ENCODE measurements at regions of chr10 and their contacts with region 1.

Region 1: DNA sequence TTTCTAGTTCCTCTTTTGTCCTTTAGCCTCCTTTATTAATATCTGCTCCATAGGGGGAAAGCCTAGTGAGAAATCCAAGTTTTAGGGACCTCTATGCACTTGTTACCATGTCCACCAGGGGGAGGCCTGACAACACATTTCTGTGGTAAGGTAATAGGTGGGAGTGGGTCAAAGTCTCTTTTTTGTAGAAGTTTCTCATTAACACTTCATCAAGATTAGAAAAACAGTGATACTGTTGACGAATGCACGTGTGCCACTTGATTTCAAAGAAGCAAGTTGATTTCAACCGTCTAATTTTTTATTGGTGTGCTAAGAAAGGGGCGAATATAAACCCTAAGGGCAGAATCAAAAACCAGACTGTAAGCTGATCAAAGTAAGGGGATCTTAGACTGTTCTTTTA is 30.6 kb downstream of the CISD1 start:
- DNase-seq: peak; percentile 62 to 68
- ATAC-seq: peak; percentile 94 to 97
- H3K4me3 ChIP-seq: no peak overlapping the region
- H3K27ac ChIP-seq: no peak overlapping the region
- H3K4me1 ChIP-seq: no peaks in the 10 kb centered on the region
- CTCF ChIP-seq: peak; percentile 88
- EP300 ChIP-seq: no peak
- POLR2A ChIP-seq: no peak
- RAD21 ChIP-seq: peak; percentile 89 to 90

Region 2: DNA sequence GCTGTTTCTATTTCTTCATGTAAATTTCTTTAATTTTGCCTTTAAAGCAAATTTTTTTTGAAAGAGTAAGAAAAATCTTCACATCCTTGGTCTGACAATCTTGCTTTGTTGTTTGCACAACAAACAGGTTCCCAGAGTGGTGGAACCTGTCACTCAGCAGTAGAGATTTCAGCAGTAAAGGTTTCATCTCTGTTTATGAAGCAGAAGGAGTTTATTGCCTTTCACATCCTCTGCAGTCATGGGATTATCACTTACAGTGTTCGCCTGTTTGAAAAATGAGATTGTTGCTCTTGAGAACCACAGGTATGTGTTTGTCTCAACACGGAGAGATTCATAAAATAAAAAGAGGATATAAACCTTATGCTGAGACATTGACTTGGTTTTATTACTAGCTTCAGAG is 374.5 kb before region 1 on chr10:
- CTCF ChIA-PET with region 1: no interaction called
- POLR2A ChIA-PET with region 1: no interaction called
- DNase-seq: no peak
- ATAC-seq: no peak
- H3K4me3 ChIP-seq: no peak overlapping the region
- H3K27ac ChIP-seq: no peak overlapping the region
- H3K4me1 ChIP-seq: peaks cover 9% of the 10 kb centered on the region
- CTCF ChIP-seq: no peak
- EP300 ChIP-seq: no peak
- POLR2A ChIP-seq: no peak
- RAD21 ChIP-seq: no peak

Region 3: DNA sequence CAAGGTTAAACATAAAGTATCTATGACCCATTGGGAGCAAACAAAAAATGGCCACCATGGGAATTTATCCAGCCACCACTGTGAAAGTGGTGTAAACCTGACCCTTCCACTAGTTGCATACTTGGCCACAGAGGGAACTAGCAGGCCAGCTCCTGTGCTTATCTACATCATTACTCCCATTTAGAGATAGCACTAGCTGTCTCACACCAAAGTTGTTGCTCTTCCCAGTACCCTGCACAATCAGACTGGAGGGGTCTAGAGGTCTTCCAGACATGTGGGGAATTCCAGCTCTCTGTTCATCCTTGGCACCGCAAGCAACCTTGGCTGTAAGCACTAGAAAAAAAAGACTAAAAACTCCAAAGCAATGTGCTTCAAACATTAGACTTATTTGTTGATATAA is 145.8 kb before region 1 on chr10:
- CTCF ChIA-PET with region 1: no interaction called
- POLR2A ChIA-PET with region 1: no interaction called
- DNase-seq: no peak
- ATAC-seq: no peak
- H3K4me3 ChIP-seq: no peak overlapping the region
- H3K27ac ChIP-seq: no peak overlapping the region
- H3K4me1 ChIP-seq: no peaks in the 10 kb centered on the region
- CTCF ChIP-seq: no peak
- EP300 ChIP-seq: no peak
- POLR2A ChIP-seq: no peak
- RAD21 ChIP-seq: no peak

Region 4: DNA sequence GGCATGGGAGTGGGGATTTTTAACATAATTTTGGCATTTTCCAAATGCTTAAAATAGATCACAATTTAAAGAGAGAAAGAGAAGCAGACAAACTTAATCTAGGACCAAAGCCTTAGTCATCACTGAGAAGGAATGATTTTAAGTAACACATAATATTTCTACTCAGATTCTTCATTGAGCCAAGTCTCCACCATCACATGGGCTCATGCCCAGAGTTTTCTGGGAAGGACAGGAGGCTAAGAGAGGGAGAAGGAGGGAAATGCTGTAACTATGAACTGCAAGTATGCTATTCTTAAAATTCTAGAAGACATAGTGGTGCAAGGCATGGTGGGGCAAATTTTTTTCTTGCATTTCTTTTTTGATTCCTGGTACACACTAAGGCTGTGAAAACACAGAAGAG is 11.4 kb after region 1 on chr10:
- CTCF ChIA-PET with region 1: interaction called, 29 read pairs
- POLR2A ChIA-PET with region 1: no interaction called
- DNase-seq: no peak
- ATAC-seq: no peak
- H3K4me3 ChIP-seq: no peak overlapping the region
- H3K27ac ChIP-seq: no peak overlapping the region
- H3K4me1 ChIP-seq: no peaks in the 10 kb centered on the region
- CTCF ChIP-seq: no peak
- EP300 ChIP-seq: no peak
- POLR2A ChIP-seq: no peak
- RAD21 ChIP-seq: no peak

Region 5: DNA sequence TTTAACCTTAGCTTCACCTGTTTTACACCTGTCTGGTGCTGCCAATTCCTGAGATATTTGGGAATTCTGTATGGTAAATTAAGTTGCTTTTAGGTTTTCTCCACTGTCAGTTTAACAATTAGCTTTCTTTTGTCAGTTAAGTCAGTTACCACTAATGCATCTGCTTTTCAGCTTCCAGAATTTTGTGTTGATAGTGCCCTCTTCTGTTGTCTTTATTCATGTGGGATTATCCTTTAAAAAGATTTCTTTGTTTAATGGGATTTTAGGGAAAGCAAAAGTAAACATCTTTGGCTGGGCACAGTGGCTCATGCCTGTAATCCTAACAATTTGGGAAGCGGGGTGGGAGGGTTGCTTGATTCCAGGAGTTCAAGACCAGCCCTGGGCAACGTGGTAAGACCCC is 93.7 kb after region 1 on chr10:
- CTCF ChIA-PET with region 1: interaction called, 14 read pairs
- POLR2A ChIA-PET with region 1: no interaction called
- DNase-seq: no peak
- ATAC-seq: no peak; a peak in 1 of 6 replicates
- H3K4me3 ChIP-seq: no peak overlapping the region
- H3K27ac ChIP-seq: no peak overlapping the region
- H3K4me1 ChIP-seq: no peaks in the 10 kb centered on the region
- CTCF ChIP-seq: 0 out of 3 replicates have a peak, but pooled peaks have one; percentile 19
- EP300 ChIP-seq: no peak
- POLR2A ChIP-seq: no peak
- RAD21 ChIP-seq: peak; percentile 18 to 23; a peak in 2 of 5 replicates

Measured in A549 (cell line).